Motor neuron (in vitro differentiated cells): ENCODE measurements at regions of chr10 and their contacts with region 1.

Region 1: GRCh38 chr10:58781873-58782488 is 269.3 kb downstream of the BICC1 start:
- ATAC-seq: peak in 7 of 8 experiments; percentile 49 to 69 (median 56)
- H3K4me3 ChIP-seq: no peak overlapping the region
- H3K27ac ChIP-seq: no peak overlapping the region
- H3K4me1 ChIP-seq: peaks cover 0 to 7% of the 10 kb centered on the region in 2 donors

Region 2: GRCh38 chr10:58943256-58943890 is 161.4 kb after region 1 on chr10:
- in situ Hi-C with region 1: loop called in 1 of 9 experiments (anchors 10 kb)
- ATAC-seq: no peak
- H3K4me3 ChIP-seq: no peak overlapping the region
- H3K27ac ChIP-seq: no peak overlapping the region
- H3K4me1 ChIP-seq: no peaks in the 10 kb centered on the region

Region 3: DNA sequence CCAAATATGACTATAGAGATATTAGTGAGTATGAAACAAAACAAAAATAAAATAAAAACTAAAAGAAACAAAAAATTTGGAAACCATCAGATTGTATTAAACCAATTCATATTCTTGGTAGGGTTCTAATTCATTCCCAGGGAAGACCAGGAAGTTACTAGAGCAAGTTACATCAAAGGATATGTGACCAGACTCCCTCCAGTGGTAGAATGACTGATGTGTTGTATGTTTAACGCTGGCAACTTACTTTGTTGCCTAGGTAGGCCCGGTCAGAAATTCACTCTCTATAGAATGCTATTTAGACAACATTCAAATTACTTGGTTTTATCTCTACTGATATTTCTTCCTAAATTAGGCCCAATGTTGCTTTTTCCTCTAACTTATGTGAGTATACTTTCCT is 399.7 kb after region 1 on chr10:
- in situ Hi-C with region 1: loop called in 1 of 9 experiments (anchors 25 kb)
- ATAC-seq: peak; percentile 29 to 71 (median 49)
- H3K4me3 ChIP-seq: peak overlapping the region in 1 of 5 donors; percentile 5
- H3K27ac ChIP-seq: no peak overlapping the region
- H3K4me1 ChIP-seq: peaks cover 2 to 14% of the 10 kb centered on the region in 2 donors

Region 4: DNA sequence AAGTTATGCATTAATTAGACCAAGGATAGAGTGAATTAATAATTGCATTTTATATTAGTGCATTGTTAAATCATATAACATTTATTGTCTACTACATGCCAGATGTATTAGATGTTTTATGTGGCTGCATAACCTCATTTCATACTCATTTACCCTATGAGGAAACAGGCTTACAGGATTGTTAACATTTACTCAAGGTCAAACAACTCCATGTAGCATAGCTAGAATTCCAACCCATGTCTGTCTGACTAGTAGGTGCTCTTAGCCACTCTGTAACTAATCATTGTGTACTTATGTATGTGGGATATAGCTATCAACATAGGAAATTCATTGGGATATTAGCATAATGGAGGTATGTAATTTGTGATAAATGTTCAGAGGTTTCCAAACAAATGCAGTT is 440.8 kb after region 1 on chr10:
- in situ Hi-C with region 1: loop called in 1 of 9 experiments (anchors 25 kb)
- ATAC-seq: peak in 1 of 8 experiments; percentile 50
- H3K4me3 ChIP-seq: no peak overlapping the region
- H3K27ac ChIP-seq: no peak overlapping the region
- H3K4me1 ChIP-seq: no peaks in the 10 kb centered on the region

Region 5: GRCh38 chr10:59580026-59580863 is 798.3 kb after region 1 on chr10:
- in situ Hi-C with region 1: loop called in 1 of 9 experiments (anchors 25 kb)
- ATAC-seq: peak in 4 of 8 experiments; percentile 29 to 67 (median 50)
- H3K4me3 ChIP-seq: no peak overlapping the region
- H3K27ac ChIP-seq: no peak overlapping the region
- H3K4me1 ChIP-seq: peaks cover 0 to 4% of the 10 kb centered on the region in 2 donors

Region 6: GRCh38 chr10:59606551-59606961 is 824.6 kb after region 1 on chr10:
- in situ Hi-C with region 1: loop called in 2 of 9 experiments (anchors 25 kb)
- ATAC-seq: peak in 4 of 8 experiments; percentile 61 to 71 (median 65)
- H3K4me3 ChIP-seq: no peak overlapping the region
- H3K27ac ChIP-seq: no peak overlapping the region
- H3K4me1 ChIP-seq: peaks cover 0 to 6% of the 10 kb centered on the region in 2 donors